ENCODE measurements at regions of chr17 and their contacts with region 1.

Region 1: DNA sequence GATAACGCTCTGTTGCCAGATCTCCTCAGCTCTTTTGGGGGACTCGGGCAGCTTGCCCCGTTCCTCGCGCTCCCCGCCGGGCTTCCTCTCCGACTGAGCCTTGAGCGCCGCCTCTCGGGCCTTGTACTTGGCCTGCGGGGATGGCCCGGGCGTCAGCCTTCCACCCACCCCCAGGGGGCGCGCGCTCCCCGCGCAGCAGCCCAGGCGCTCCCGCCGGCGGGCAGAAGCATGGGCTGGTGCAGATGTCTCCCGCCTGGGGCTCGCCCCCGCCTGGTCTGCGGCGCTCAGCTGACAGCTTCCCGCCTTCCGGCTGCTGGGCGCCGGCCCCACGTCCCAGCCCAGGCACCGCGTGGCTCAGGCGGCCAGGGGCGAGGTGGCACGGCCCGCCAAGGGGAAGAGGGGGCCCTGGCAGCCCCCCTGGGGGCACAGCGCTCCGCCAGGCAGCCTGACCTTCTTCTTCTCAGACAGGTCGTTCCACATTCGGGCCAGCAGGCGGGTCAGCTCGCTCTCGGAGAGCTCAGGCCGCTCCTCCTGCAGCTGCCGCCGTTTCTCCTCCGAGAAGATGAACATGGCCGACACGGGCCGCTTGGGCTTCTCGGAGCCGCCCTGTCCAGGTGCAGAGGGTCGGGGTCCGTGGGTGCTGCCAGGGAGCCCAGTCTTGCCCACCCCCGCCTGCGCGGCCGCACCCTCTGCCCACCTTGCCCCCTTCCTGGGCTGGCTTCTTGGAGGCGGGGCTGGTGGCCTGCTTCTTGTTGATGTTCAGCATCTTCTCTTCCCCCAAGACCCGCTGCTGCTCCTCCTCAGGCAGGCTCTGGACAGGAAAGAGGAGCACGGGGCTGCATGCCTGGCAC is 8.9 kb downstream of the UBTF start:
- DNase-seq: peak; percentile 92 to 96
- H3K4me3 ChIP-seq: peak overlapping the region in 3 of 4 donors; percentile 0 to 32 (median 27)
- H3K27ac ChIP-seq: peak overlapping the region; percentile 53 to 79 (median 61)
- H3K4me1 ChIP-seq: peaks cover 20 to 54% (median 28%) of the 10 kb centered on the region in 4 donors
- H3K27me3 ChIP-seq: no peaks in the 10 kb centered on the region
- CTCF ChIP-seq: peak in 5 of 7 experiments; percentile 97 to 99 (median 97)
- EP300 ChIP-seq: no peak
- POLR2A ChIP-seq: no peak

Region 2: DNA sequence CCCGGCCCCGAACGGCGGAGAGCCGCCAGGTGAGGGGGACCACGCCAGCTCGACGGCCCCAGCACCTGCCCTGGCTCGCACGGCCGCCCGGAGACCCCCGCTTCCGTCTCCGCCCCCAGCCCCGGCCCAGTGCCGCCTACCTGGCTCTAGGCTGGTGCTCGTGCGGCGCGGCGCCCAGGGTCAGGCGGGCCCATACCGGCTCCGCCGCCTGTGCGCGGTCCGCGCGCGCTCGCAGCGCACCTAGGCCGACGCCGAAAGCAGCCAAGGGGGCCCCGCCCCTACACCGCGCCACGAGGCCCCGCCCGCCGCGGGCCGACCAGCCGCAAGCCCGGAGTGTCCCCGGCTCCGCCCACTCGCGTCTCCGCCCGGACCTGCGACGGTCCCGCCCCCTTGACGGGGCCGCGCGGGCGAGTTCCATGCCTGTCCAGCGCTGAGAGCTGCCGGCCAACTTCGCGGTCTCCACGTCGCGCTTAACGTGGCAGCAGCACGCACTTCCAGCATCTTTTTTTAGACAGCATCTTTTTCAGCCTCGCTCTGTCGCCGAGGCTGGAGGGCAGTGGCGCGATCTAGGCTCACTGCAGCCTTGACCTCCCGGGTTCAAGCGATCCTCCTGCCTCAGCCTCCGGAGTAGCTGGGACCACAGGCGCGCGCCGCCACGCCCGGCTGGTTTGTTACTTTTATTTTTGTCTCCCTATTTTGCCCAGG is 114.2 kb after region 1 on chr17 and contains the start of gene SLC25A39:
- intact Hi-C with region 1: loop called (anchors 5 kb)
- DNase-seq: peak; percentile 97 to 98
- H3K4me3 ChIP-seq: peak within 1 kb of the TSS; percentile 96 to 99 (median 98)
- H3K27ac ChIP-seq: peak within 1 kb of the TSS; percentile 90 to 97 (median 96)
- H3K4me1 ChIP-seq: peaks cover 18 to 41% (median 34%) of the 10 kb centered on the region in 4 donors
- H3K27me3 ChIP-seq: no peaks in the 10 kb centered on the region
- CTCF ChIP-seq: peak in 1 of 7 experiments; percentile 11
- EP300 ChIP-seq: no peak
- POLR2A ChIP-seq: no peak
- total RNA-seq, gene SLC25A39: 42.0 to 351 (median 133) TPM

Region 3: DNA sequence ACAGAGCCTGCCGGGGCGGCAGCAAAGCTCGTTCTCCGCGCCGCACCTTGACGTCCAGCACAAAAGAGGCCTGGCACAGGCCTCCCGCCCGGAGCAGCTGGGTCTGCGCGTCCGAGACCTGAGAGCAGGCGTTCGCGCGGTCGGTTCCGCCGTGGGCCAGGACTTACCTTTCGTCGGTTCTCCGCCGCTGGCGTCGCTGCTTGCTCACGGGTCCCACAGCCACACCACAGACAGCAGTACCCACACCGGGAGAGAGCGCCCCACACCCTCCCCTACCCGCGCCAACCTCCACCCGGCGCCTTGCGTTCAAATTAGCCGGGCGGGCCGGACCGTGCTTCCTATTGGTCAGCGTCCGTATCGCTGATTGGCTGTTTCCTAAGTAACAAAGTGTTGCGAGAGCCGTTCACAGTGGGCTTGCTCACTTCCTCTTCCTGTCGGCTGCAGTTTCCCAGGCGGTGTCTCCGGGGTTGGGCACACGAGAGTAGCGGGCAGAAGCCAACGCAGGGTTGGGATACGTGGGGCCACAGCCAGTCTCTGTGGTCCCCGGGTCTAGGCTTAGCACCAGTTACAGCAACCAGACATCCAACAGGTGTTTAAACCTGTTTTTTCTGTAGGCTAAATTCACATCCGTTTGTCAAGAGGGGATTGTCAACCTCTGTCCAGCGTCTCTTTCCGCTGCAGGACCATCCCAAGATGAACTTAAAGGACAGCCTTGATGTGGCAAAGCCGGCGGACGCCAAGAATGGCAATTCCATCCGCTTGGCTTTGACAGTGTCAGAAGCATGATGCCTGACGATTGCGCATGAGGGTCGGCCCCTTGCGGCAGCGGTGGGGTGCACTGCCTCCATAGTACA is 737.1 kb after region 1 on chr17 and contains the start of gene KIF18B:
- intact Hi-C with region 1: no loop called
- DNase-seq: peak; percentile 87 to 97
- H3K4me3 ChIP-seq: peak within 1 kb of the TSS; percentile 47 to 92 (median 56)
- H3K27ac ChIP-seq: peak within 1 kb of the TSS in 4 of 5 donors; percentile 56 to 75 (median 67)
- H3K4me1 ChIP-seq: peaks cover 5 to 19% (median 16%) of the 10 kb centered on the region in 4 donors
- H3K27me3 ChIP-seq: peaks cover 0 to 11% (median 0%) of the 10 kb centered on the region in 3 donors
- CTCF ChIP-seq: peak in 1 of 7 experiments; percentile 4
- EP300 ChIP-seq: no peak
- POLR2A ChIP-seq: no peak
- total RNA-seq, gene KIF18B: 0.58 to 12.2 (median 2.0) TPM in 4 of 5 donors, not detected in the other

Measured in stomach (tissue), 19 donors.